ENCODE measurements at regions of chr3 and their contacts with region 1.

Region 1: DNA sequence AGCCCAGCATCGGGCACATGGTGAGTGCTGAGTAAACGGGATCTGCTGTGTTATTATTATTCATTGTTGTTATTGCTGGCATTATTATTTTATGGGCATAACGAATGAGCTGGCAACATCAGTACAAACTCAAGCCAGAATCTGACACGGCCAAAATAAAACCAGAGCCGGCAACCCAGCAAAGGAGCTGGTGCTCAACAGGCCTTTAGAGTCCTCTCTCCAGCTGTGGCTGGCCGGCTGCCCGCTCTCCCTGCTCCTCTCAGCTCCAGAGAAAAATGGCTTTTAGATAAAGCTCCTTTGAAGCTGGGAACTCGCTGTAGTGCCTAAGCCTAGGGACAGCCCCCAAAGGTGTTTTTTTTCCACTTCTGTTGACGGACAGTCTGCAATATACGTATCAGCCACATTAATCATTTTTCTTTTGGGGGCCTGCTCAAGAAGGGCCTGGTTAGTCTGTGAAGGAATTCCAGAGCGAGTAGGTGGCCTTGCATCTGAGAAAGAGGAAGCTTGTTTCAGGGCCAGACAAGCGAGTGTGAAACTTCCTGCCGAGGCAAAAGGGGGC is 193.9 kb upstream of the UBE2E1 start:
- DNase-seq: peak; percentile 24 to 90 (median 84)
- H3K4me3 ChIP-seq: peak overlapping the region in 52 of 59 donors; percentile 8 to 61 (median 34)
- H3K27ac ChIP-seq: peak overlapping the region in 54 of 59 donors; percentile 1 to 87 (median 66)
- H3K27me3 ChIP-seq: no peaks in the 10 kb centered on the region
- CTCF ChIP-seq: peak in 2 of 56 donors; percentile 12 to 16

Region 2: DNA sequence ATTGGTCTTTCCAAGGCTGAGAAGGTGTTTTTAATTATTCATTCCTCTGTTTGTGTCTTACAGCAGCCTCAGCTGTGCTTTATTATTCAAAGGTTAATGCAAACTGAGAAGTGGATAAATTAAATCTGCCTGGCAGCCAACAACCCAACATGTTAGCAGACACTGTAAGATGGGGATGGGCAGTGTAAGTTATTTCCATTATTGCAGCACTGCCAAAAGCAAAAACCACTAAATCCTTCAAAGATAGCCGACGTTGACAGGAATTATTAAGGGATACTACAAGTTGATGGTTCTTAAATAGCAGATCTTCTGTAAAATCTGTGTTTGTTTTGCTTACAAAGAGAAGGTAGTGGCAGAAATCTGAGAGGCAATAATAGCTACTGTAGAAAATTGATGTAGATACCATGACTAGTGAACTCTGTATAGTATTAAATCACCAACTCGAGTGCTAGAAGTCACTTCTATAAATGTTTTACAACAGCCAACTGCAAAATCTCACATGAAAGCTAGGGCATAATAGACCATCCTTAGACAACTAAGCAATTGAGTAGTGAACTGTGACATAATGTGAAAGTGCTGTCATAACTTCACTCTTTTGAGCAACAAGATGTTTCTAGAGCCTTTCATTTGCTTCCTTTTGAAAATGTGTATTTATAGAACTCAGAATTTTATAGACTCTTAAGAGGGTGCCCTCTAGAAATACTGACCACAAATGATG is 130.1 kb before region 1 on chr3:
- intact Hi-C with region 1: loop called in 1 of 2 experiments (anchors 10 kb)
- DNase-seq: no peak
- H3K4me3 ChIP-seq: peak overlapping the region in 9 of 59 donors; percentile 20 to 54 (median 35)
- H3K27ac ChIP-seq: peak overlapping the region in 57 of 59 donors; percentile 20 to 93 (median 83)
- H3K27me3 ChIP-seq: no peaks in the 10 kb centered on the region
- CTCF ChIP-seq: peak in 1 of 56 donors; percentile 17

Region 3: GRCh38 chr3:24012589-24013269 is 400.9 kb after region 1 on chr3:
- intact Hi-C with region 1: no loop called
- DNase-seq: no peak
- H3K4me3 ChIP-seq: no peak overlapping the region
- H3K27ac ChIP-seq: no peak overlapping the region
- H3K27me3 ChIP-seq: no peaks in the 10 kb centered on the region
- CTCF ChIP-seq: no peak

Measured in dorsolateral prefrontal cortex (tissue), 120 donors.